Heart right ventricle (tissue), 16 donors: ENCODE measurements at regions of chr12 and their contacts with region 1.

Region 1: GRCh38 chr12:69639400-69640016 is 28.8 kb upstream of the LRRC10 start:
- DNase-seq: peak; percentile 53 to 62
- ATAC-seq: peak; percentile 50 to 79 (median 60)
- H3K4me3 ChIP-seq: no peak overlapping the region
- H3K27ac ChIP-seq: no peak overlapping the region
- H3K4me1 ChIP-seq: peaks cover 0 to 8% (median 0%) of the 10 kb centered on the region in 9 donors
- H3K27me3 ChIP-seq: no peaks in the 10 kb centered on the region
- CTCF ChIP-seq: peak; percentile 63 to 93 (median 86)

Region 2: DNA sequence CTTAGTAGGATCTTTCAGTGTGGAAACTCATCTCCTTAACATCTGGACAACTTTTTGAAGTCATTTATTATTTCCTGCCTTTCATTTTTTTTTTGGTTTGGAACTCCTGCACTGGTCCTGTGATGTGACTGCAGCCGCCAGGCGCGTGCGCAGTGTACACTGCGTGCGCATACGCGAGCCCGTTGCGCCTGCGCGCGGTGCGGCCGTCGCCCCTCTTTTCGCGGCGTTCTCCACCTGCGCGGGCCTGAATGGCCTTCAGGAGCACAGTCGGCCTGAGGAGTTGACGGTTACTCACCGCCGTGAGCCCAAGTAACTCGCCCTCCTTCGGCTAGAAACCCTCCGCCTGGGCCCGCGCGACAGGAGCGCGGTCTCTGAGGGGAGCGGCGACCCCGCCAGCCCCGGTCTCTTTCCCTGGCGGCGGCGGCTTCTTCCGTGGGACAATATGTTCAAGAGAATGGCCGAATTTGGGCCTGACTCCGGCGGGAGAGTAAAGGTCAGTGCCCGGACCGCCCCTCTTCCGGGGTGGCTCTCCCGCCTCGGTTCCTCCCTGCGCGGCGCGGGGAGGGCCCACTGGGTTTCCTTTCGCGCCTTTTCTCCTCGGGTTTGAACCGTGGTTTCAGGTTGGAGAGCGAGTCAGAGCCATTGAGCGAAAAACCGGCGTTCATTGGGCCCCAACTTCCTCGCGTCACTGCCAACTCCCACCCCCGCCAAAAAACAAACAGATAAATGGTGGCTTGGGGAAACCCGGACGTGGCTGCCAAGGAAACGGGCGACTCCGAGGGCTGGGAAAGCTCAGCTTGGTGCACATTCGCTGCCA is 279.8 kb before region 1 on chr12 and contains the start of gene YEATS4:
- intact Hi-C with region 1: loop called in 4 of 10 experiments (anchors 2 to 5 kb)
- DNase-seq: peak; percentile 82 to 87
- ATAC-seq: peak; percentile 97 to 99 (median 98)
- H3K4me3 ChIP-seq: peak within 1 kb of the TSS; percentile 71 to 100 (median 84)
- H3K27ac ChIP-seq: peak within 1 kb of the TSS; percentile 87 to 99 (median 95)
- H3K4me1 ChIP-seq: peaks cover 0 to 26% (median 12%) of the 10 kb centered on the region in 9 donors
- H3K27me3 ChIP-seq: no peaks in the 10 kb centered on the region
- CTCF ChIP-seq: no peak
- total RNA-seq, gene YEATS4: 7.4 to 13.1 (median 9.5) TPM

Region 3: DNA sequence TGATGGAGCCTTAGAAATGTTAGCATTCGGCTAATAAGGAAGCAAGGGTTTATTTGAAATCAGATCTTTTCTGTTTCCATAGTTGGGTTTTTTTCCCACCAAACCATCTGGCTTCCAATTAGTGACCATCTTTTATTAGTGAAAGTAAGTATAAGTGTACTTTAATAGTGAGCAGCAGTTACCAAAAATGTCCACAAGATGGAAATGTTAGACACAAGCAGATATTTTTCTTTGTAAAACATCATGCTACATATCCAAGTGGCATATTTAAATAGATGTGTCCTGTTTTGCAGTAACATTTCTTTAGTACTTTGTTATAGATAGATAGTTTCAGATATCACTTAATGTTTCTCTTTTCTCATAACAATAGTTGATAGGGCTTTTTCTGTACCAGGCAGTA is 251.1 kb before region 1 on chr12:
- intact Hi-C with region 1: loop called in 1 of 10 experiments (anchors 5 kb)
- DNase-seq: no peak
- ATAC-seq: peak in 1 of 8 donors; percentile 53
- H3K4me3 ChIP-seq: no peak overlapping the region
- H3K27ac ChIP-seq: no peak overlapping the region
- H3K4me1 ChIP-seq: no peaks in the 10 kb centered on the region
- H3K27me3 ChIP-seq: no peaks in the 10 kb centered on the region
- CTCF ChIP-seq: peak; percentile 44 to 69 (median 60)

Region 4: GRCh38 chr12:69415471-69416275 is 223.8 kb before region 1 on chr12:
- intact Hi-C with region 1: loop called in 1 of 10 experiments (anchors 10 kb)
- DNase-seq: peak; percentile 32 to 37
- ATAC-seq: peak; percentile 79 to 95 (median 83)
- H3K4me3 ChIP-seq: no peak overlapping the region
- H3K27ac ChIP-seq: no peak overlapping the region
- H3K4me1 ChIP-seq: peaks cover 3 to 12% (median 7%) of the 10 kb centered on the region in 9 donors
- H3K27me3 ChIP-seq: no peaks in the 10 kb centered on the region
- CTCF ChIP-seq: peak; percentile 43 to 77 (median 68)

Region 5: GRCh38 chr12:69490920-69491643 is 148.4 kb before region 1 on chr12:
- intact Hi-C with region 1: no loop called
- DNase-seq: no peak
- ATAC-seq: no peak
- H3K4me3 ChIP-seq: no peak overlapping the region
- H3K27ac ChIP-seq: no peak overlapping the region
- H3K4me1 ChIP-seq: peaks cover 0 to 15% (median 4%) of the 10 kb centered on the region in 9 donors
- H3K27me3 ChIP-seq: no peaks in the 10 kb centered on the region
- CTCF ChIP-seq: no peak

Region 6: DNA sequence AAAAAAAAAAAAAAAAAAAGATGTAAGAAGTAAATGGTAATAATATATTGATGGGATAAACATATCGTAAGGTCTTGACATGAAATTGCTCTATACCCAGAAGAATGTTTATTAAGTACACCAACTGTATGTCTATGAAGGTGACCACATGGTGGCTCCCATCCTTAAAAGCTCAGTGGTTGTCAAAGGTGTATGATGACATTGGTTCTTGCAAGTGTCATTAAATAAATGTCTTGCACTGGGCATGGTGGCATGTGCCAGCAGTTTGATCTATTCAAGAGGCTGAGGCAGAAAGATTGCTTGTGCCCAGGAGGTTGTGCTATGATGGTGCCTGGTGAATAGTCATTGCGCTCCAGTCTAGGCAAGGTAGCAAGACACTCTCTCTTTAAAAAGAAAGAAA is 43.8 kb before region 1 on chr12:
- intact Hi-C with region 1: loop called in 1 of 10 experiments (anchors 5 kb)
- DNase-seq: no peak
- ATAC-seq: peak in 3 of 8 donors; percentile 48 to 58 (median 48)
- H3K4me3 ChIP-seq: no peak overlapping the region
- H3K27ac ChIP-seq: no peak overlapping the region
- H3K4me1 ChIP-seq: peaks cover 0 to 12% (median 0%) of the 10 kb centered on the region in 9 donors
- H3K27me3 ChIP-seq: no peaks in the 10 kb centered on the region
- CTCF ChIP-seq: peak in 2 of 9 donors; percentile 10 to 14

Region 7: DNA sequence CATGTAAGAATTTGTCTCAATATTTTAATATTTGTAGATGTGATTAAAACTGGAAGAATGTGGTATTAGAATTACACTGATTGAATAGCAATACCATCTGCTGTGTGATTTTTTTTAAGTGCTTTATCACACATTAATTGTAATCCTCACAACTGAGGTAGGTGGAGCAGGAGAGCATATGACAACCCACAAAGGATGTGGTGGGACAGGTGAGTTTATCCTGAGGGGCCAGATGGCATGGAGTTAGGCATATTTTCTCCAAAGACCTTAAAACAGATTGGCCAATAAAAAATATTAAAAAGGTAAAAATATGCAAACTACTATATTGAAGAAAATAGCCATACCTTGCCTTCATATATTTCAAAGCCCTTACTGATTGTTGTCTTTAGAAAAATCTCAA is 36.6 kb before region 1 on chr12:
- intact Hi-C with region 1: loop called in 2 of 10 experiments (anchors 2 to 5 kb)
- DNase-seq: no peak
- ATAC-seq: no peak
- H3K4me3 ChIP-seq: no peak overlapping the region
- H3K27ac ChIP-seq: no peak overlapping the region
- H3K4me1 ChIP-seq: peaks cover 0 to 10% (median 0%) of the 10 kb centered on the region in 9 donors
- H3K27me3 ChIP-seq: no peaks in the 10 kb centered on the region
- CTCF ChIP-seq: no peak

Region 8: DNA sequence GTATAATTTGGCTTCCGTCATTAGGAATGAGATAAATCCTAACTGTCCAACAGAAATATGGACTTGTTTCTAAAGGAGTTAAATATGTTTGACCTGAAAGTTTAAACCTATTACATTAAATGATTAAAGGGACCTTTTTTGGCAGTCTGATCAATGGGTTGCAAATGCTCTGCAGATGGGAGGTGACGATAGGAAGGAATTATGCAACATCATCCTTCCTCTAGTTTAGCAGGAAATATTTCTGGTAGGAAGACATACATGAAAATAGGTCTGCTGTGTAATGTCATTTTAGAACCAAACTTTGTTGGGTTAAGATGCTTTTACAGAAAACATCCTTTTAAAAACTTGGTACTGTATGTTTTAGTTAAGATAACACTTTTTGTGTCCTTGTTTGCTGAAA is 31.4 kb before region 1 on chr12:
- intact Hi-C with region 1: loop called in 2 of 10 experiments (anchors 2 to 5 kb)
- DNase-seq: no peak
- ATAC-seq: no peak
- H3K4me3 ChIP-seq: peak overlapping the region in 9 of 10 donors; percentile 27 to 56 (median 45)
- H3K27ac ChIP-seq: peak overlapping the region in 7 of 10 donors; percentile 17 to 79 (median 65)
- H3K4me1 ChIP-seq: peaks cover 0 to 22% (median 5%) of the 10 kb centered on the region in 9 donors
- H3K27me3 ChIP-seq: no peaks in the 10 kb centered on the region
- CTCF ChIP-seq: no peak

Region 9: DNA sequence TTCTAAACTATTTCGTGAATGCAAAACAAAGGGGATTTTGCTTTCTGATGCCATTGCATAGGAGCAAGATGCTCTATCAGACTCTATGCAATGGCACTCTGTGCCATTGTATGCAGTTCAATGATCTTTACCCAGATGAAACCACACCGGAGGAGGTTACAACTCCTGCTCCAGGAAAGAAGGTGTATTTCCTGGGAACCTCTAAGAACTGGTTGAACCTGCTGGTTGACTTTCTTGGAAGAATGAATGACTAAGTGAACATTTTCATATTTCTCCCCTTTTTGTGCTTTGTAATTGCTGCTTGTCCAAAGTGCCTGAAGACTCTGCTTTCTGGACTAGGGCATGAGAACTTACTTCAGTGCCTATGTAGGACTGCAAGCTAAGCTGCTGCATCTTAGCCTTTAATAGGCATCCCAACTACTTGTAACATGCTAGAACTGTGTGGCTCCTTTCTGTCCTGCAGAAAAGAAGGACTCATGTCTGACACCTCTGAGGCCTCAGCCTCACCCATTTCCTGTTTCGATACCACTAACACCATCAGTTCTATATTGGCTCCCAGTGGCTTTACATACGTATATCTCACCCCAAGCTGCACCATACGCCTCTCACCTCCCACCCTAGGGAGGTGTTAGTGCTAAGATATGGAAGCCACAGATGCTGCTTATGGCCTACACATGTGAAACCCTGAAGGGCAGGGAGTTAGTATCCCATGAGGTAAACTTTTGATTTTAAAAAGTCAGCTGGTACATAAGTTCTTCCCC is 410.3 kb after region 1 on chr12:
- intact Hi-C with region 1: no loop called
- DNase-seq: no peak
- ATAC-seq: no peak
- H3K4me3 ChIP-seq: no peak overlapping the region
- H3K27ac ChIP-seq: no peak overlapping the region
- H3K4me1 ChIP-seq: peaks cover 0 to 19% (median 0%) of the 10 kb centered on the region in 9 donors
- H3K27me3 ChIP-seq: peaks cover 0 to 4% (median 0%) of the 10 kb centered on the region in 7 donors
- CTCF ChIP-seq: no peak